Activated naive CD4-positive, alpha-beta T cell treated with anti-CD3 and anti-CD28 coated beads for 36 hours (primary cell): ENCODE measurements at regions of chr20 and their contacts with region 1.

Region 1: DNA sequence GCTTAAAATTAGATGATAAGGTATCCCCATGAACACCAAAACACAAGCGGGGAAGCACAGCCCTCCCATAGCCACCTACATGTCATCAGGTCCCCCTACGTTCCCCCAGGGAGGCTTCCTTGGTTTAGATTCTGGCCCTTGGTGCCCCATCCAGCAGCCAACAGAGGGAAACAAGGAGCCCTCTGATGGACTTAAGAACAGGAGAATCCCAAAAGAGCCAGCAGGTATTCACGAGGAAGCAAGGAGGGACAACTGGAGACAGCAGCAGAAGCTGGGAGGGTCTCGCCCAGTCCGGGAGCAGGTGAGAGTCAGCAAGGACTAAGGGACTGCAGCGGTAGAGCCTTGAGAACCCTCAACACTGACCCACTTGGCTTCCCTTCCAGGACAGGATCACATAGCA is 58.4 kb upstream of the TOP1 start:
- DNase-seq: no peak
- H3K4me3 Mint-ChIP-seq: no peak overlapping the region
- H3K27ac Mint-ChIP-seq: no peak overlapping the region
- H3K4me1 Mint-ChIP-seq: peaks cover 6% of the 10 kb centered on the region
- H3K27me3 Mint-ChIP-seq: peaks cover 5% of the 10 kb centered on the region

Region 2: DNA sequence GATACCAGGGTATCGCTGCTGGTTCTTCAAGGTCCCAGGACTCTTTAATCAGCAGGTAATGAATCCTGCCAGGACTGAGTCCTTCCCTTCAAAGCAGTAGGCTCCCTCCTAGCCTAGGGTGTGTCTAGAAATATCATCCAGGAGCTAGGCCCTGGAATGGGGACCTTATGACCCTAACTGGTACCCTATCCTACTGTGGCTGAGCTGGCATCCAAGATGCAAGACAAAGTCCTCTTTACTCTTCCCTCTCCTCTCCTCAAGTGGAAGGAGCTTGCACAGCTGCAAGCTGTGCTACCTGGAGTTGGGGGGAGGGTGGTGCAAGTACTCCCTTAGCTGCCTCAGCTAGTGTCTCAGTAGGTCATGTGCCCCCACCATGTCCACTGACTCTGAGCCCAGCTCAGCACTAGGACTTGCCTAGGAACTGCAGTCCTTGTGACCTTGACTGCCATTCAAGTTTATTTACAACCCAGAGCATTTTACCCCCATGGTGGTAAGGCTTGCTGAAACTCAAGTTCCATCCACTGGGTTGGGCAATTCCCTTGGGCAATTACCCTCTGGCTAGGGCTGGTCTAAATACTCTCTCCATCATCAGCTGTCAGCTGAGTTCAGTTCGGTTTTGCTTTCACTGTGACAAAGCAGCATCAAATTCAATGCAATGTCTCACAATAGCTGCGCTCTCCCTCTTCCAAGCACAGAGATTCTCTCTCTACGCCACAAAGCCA is 10.1 kb after region 1 on chr20:
- CTCF ChIA-PET with region 1: interaction called, 12 read pairs
- intact Hi-C with region 1: no loop called
- DNase-seq: no peak
- H3K4me3 Mint-ChIP-seq: no peak overlapping the region
- H3K27ac Mint-ChIP-seq: no peak overlapping the region
- H3K4me1 Mint-ChIP-seq: no peaks in the 10 kb centered on the region
- H3K27me3 Mint-ChIP-seq: peaks cover 6% of the 10 kb centered on the region

Region 3: GRCh38 chr20:41095110-41095969 is 125.1 kb after region 1 on chr20:
- CTCF ChIA-PET with region 1: interaction called, 39 read pairs
- intact Hi-C with region 1: loop called (anchors 1 kb)
- DNase-seq: peak; percentile 70
- H3K4me3 Mint-ChIP-seq: no peak overlapping the region
- H3K27ac Mint-ChIP-seq: peak overlapping the region; percentile 61
- H3K4me1 Mint-ChIP-seq: peaks cover 14% of the 10 kb centered on the region
- H3K27me3 Mint-ChIP-seq: no peaks in the 10 kb centered on the region

Region 4: DNA sequence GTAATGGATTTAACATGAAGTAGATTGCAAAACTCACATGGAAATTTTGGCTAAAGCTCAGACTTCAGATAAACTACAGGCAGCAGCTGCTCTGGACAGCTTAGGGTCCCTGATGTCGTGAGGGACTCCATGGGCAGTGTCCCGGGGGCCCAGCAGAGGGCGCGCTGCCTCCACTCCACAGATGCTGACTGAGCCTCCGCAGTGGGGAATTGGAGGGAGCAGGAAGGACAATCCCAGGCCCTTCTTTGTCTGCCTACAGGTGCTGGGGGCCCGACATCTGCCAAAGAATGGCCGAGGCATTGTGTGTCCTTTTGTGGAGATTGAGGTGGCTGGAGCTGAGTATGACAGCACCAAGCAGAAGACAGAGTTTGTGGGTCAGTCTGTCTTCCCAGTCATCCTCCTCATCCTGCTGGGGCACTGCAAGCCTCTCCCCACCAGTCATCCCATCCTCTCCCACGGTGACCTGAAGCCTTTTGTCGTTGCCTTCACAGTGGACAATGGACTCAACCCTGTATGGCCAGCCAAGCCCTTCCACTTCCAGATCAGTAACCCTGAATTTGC is 203.0 kb after region 1 on chr20:
- CTCF ChIA-PET with region 1: interaction called, 3 read pairs
- intact Hi-C with region 1: loop called (anchors 1 kb)
- DNase-seq: peak; percentile 75
- H3K4me3 Mint-ChIP-seq: no peak overlapping the region
- H3K27ac Mint-ChIP-seq: peak overlapping the region; percentile 36
- H3K4me1 Mint-ChIP-seq: peaks cover 4% of the 10 kb centered on the region
- H3K27me3 Mint-ChIP-seq: no peaks in the 10 kb centered on the region

Region 5: GRCh38 chr20:41232973-41233926 is 263.0 kb after region 1 on chr20:
- CTCF ChIA-PET with region 1: interaction called, 5 read pairs
- intact Hi-C with region 1: loop called (anchors 1 kb)
- DNase-seq: no peak
- H3K4me3 Mint-ChIP-seq: no peak overlapping the region
- H3K27ac Mint-ChIP-seq: no peak overlapping the region
- H3K4me1 Mint-ChIP-seq: peaks cover 24% of the 10 kb centered on the region
- H3K27me3 Mint-ChIP-seq: no peaks in the 10 kb centered on the region

Region 6: DNA sequence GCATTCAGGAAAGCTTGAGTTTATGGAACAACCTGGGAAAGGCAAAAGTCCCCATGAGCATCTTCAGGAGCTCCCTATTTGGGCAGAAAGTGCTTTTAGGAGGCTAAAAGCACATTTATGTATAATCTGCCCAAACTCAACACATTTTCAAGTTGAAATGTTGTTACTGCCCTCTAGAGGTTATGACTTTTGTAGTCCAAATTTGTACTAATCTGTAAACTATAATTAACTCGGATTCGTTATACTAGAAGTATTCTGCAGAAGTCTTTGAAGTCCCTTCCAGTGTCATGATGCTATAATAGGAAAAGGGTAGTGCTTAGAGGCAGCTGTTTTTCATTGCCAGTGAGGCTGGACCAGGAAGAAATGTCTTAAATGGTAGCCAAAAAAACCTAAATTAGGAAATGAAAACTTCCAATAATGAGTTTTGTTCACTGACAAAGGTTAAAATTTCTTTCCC is 441.2 kb after region 1 on chr20:
- CTCF ChIA-PET with region 1: interaction called, 4 read pairs
- intact Hi-C with region 1: loop called (anchors 2 kb)
- DNase-seq: no peak
- H3K4me3 Mint-ChIP-seq: no peak overlapping the region
- H3K27ac Mint-ChIP-seq: no peak overlapping the region
- H3K4me1 Mint-ChIP-seq: peaks cover 12% of the 10 kb centered on the region
- H3K27me3 Mint-ChIP-seq: no peaks in the 10 kb centered on the region